ENCODE measurements at regions of chr9 and their contacts with region 1.

Region 1: DNA sequence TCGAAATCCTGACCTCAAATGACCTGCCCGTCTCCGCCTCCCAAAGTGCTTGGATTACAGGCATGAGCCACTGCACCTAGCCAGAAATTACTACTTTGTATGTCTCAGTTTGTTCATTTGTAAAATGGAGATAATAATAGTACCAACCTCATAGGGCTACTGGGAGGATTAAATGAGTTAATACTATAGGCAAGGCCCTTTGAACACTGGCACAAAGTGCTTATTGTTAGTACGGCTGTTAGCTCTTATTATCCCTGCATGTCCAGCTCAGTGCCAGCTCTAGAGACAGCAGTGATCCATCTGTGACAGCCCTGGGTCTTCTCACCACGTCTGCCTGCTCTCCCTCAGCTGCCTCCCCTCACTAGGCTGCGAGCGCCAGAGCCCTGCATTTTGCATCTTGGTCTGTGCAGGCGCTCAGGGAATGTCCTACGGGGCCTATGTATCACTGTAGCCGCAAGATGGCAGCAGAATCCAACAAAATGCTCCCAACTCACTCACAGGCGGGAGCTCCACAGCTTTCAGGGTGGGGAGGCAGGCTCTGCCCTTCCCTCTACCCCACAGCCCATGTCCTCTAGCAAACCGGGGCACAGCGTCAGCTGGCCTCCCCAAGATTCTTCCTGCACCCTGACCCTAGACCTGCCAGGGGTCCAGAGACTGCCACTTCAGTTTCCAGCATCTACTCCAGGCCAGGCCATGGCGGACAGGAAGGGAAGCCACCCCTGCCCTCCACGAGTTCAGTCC is 17.7 kb upstream of the AKNA start:
- DNase-seq: peak; percentile 87
- ATAC-seq: peak; percentile 98
- H3K4me3 Mint-ChIP-seq: no peak overlapping the region
- H3K27ac Mint-ChIP-seq: peak overlapping the region; percentile 34
- H3K4me1 Mint-ChIP-seq: peaks cover 12% of the 10 kb centered on the region
- H3K27me3 Mint-ChIP-seq: no peaks in the 10 kb centered on the region

Region 2: DNA sequence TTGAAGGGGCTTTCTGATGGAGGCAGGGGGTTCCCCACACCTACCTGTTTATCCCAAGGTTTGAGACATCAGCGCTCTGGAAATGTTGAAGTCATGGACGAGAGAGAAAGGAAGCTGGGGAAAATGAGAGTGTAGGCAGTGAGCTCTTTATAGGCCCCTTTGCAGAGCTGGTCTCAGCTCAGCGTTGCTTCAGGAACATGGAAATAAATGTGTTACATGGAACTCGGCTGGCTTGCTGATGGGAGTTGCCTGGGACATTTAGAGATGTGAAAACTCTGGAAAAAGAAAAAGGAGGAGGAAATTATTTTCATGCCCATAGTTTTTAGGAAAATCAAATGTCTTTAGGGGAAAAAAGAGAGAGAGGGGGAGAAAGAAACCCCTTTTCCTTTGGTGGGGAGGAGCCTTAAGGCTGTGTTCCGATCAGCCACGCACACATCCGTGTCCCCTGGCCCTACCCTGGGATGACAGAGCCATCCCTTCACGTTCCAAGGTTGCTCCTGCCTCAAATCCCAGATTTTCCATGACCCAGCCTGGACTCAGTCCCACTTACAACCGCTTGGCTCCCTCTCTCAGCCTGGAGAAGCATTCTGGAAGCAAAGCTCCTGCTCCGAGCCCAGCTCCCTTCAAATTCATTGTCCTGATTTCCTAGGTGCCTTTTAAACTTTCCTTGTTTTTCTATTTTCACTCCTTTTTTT is 171.8 kb before region 1 on chr9:
- CTCF ChIA-PET with region 1: no interaction called
- DNase-seq: no peak
- ATAC-seq: no peak
- H3K4me3 Mint-ChIP-seq: no peak overlapping the region
- H3K27ac Mint-ChIP-seq: no peak overlapping the region
- H3K4me1 Mint-ChIP-seq: no peaks in the 10 kb centered on the region
- H3K27me3 Mint-ChIP-seq: peaks cover 16% of the 10 kb centered on the region

Region 3: GRCh38 chr9:114244570-114244969 is 160.9 kb before region 1 on chr9:
- CTCF ChIA-PET with region 1: no interaction called
- DNase-seq: no peak
- ATAC-seq: no peak
- H3K4me3 Mint-ChIP-seq: no peak overlapping the region
- H3K27ac Mint-ChIP-seq: no peak overlapping the region
- H3K4me1 Mint-ChIP-seq: no peaks in the 10 kb centered on the region
- H3K27me3 Mint-ChIP-seq: no peaks in the 10 kb centered on the region

Region 4: DNA sequence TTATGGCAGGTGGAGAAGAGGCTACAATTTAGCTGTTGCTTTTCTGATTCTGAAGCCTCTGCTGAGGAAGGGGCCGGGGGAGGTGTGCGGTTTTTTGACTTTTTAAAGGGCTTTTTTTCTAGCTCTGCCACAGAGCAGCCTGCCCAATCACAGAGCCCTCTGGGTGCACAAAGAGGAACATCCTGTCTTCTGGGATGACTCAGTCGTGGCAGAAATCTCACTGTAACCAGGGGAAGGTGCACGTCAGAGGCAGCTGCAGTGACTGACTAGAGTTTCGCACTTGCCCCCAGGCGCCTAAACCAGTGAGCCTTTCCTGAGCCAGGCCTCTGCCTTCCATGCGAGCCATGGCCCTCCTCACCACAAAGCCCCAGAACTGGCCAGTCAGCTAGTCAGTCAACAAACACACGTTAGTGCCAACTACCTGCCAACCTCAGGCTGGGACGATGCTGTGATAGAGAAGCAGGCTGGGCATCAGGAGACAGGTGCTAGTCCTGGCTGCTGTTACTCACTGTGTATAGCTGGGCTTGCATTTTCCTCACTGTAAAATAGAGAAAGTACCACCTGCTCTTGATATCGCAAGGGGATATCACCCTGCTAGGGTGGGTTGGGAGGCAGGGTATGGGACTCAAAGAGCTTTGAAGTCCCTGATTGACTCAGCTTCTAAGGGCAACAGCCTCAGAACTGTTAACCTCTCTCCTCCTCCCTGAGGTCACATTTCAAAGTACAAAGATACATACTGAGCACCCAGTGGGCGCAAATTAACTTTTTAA is 19.9 kb before region 1 on chr9:
- CTCF ChIA-PET with region 1: interaction called, 20 read pairs
- DNase-seq: peak; percentile 97
- ATAC-seq: peak; percentile 83
- H3K4me3 Mint-ChIP-seq: peak overlapping the region; percentile 100
- H3K27ac Mint-ChIP-seq: peak overlapping the region; percentile 96
- H3K4me1 Mint-ChIP-seq: peaks cover 52% of the 10 kb centered on the region
- H3K27me3 Mint-ChIP-seq: no peaks in the 10 kb centered on the region

Region 5: DNA sequence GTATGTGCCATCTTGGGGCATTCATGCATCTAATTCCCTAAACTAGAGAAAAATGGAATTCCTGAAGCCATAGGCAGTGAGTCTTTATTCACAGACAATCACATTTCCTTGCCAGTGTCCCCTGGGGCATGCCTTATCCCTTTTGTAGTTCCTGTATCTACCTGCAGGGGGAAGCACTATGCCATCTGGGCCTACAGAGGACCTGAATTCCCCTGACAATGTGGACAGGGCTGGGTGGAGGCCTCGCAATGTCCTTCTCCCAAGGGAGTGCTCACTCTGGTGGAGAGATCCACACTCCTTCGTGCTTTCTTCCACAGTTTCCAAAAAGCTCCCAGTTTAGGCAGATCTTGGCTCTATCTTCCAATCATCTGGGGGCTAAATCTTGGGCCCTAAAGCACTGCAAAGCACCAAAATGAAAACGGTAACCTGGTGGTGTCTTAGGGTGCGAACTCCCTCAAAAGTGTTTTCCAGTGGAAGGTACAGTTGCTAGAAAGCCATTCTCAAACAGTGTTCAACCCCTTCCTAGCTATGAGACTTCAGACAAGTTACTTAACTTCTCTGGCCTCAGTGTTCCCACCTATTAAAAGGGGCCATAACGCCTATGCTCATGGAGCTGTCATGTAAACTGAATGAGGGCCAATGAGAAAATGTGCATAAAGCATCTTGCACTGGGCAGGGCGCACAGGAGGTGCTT is 82.3 kb after region 1 on chr9:
- CTCF ChIA-PET with region 1: interaction called, 22 read pairs
- DNase-seq: peak; percentile 73
- ATAC-seq: peak; percentile 60
- H3K4me3 Mint-ChIP-seq: no peak overlapping the region
- H3K27ac Mint-ChIP-seq: no peak overlapping the region
- H3K4me1 Mint-ChIP-seq: peaks cover 27% of the 10 kb centered on the region
- H3K27me3 Mint-ChIP-seq: no peaks in the 10 kb centered on the region

Region 6: GRCh38 chr9:114505187-114506081 is 100.0 kb after region 1 on chr9 and contains the start of gene WHRN:
- CTCF ChIA-PET with region 1: interaction called, 105 read pairs
- DNase-seq: peak; percentile 91
- ATAC-seq: peak; percentile 84
- H3K4me3 Mint-ChIP-seq: peak within 1 kb of the TSS; percentile 74
- H3K27ac Mint-ChIP-seq: peak within 1 kb of the TSS; percentile 63
- H3K4me1 Mint-ChIP-seq: peaks cover 30% of the 10 kb centered on the region
- H3K27me3 Mint-ChIP-seq: peaks cover 60% of the 10 kb centered on the region
- total RNA-seq, gene WHRN: 6.5 to 12.4 TPM

Region 7: DNA sequence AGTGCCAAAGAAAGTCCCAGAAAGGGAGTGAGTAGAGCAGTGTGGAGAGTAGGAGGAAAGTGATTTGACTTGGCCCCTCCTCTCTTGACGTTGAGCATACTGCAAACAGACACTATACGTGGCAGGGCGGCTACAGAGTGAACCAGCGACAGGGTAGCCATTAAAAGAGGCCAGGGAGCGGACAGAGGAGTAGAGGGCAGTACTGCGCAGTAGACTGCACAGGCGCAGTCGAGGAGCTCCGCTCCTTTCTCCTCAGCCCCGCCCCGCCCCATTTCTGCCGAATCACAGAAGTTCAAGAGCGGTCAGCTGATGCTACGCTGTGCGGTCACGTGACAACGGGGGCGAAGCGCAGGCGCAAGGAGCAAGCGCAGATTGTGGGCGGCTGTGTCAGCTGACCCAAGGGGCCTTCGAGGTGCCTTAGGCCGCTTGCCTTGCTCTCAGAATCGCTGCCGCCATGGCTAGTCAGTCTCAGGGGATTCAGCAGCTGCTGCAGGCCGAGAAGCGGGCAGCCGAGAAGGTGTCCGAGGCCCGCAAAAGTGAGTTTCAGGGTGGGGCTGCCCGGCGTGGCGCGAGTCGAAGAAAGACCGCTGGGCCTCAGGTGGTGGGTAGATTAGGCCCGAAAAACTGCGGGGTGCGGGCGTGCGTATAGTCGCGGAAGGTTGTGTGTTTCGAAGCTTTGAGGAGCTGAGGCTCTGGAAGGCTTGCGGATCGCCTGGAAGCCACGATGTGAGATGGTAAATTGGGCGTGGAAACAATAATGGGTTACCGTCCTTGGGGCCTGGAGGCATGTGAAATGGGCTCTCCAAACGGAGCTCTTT is 182.1 kb after region 1 on chr9 and contains the start of gene ATP6V1G1:
- CTCF ChIA-PET with region 1: interaction called, 21 read pairs
- DNase-seq: peak; percentile 100
- ATAC-seq: peak; percentile 95
- H3K4me3 Mint-ChIP-seq: peak within 1 kb of the TSS; percentile 96
- H3K27ac Mint-ChIP-seq: peak within 1 kb of the TSS; percentile 96
- H3K4me1 Mint-ChIP-seq: peaks cover 46% of the 10 kb centered on the region
- H3K27me3 Mint-ChIP-seq: no peaks in the 10 kb centered on the region
- total RNA-seq, gene ATP6V1G1: 62.4 to 66.7 TPM

Region 8: GRCh38 chr9:114611516-114612271 is 206.2 kb after region 1 on chr9:
- CTCF ChIA-PET with region 1: interaction called, 18 read pairs
- DNase-seq: peak; percentile 60
- ATAC-seq: peak; percentile 76
- H3K4me3 Mint-ChIP-seq: peak overlapping the region; percentile 91
- H3K27ac Mint-ChIP-seq: peak overlapping the region; percentile 92
- H3K4me1 Mint-ChIP-seq: peaks cover 45% of the 10 kb centered on the region
- H3K27me3 Mint-ChIP-seq: no peaks in the 10 kb centered on the region

Measured in activated CD8-positive, alpha-beta memory T cell treated with anti-CD3 and anti-CD28 coated beads, Interleukin-2, amount 10 ng/mL, durations not matched to agents 7 days and 5 days (primary cell).